Left cardiac atrium (tissue), 4 donors: ENCODE measurements at regions of chr7 and their contacts with region 1.

Region 1: DNA sequence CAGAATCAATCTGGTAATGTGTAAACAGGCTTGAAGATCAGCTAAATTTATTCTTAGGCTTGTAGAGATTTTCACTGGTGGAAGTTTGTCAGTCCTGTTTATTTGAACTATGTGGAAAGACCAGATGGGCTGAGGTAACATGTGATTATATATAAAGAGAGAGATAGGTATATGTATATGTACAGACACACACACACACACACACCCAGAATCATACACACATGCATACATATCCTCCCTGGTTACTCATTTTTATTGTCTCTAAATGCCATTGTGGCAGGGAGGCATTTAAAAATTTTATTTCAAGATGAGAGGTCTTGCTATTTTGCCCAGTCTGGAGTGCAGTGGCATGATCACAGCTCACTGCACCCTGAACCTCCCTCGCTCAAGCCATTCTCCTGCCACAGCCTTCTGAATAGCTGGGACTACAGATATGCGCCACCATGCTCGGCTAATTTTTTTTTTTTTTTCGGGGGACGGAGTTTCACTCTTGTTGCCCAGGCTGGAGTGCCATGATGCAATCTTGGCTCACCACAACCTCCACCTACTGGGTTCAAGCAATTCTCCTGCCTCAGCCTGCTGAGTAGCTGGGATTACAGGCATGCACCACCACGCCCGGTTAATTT is 78.1 kb upstream of the CYTH3 start:
- DNase-seq: no peak
- ATAC-seq: no peak

Region 2: DNA sequence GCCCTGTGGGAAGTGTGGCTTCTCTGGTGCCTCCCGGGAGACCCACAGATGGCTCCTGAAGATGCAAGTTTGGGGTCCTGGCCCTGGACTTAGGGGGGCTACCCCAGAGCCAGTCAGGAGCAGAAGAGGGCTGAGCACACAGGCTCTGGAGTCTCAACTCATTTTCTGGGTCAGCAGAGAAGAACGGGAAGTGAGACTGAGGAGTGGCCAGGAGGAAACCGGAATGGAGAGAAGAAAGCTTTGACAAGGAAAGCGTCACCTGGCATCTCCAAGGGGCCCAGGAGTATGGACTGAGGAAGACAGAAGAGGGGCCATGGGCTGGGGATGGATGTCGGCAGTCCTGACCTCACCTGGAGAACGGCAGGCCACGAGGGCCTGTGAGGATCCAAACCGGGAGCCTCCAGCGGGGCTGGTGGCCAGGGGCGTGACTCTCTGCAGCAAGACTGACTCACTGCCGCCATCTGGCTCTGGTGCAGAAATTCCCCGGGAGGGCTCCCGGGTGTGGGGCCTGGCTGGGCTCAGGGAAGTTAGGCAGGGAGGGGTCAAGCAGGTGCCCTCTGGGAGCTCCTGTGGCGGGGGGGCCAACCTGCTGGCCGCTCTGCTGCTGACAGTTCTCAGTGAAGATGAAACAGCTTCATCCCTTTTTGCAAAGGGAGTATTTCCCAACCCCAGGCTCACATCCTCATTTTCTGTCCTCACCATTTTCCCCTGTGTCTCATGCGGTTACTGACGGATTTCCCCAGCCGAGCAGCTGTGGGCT is 73.6 kb after region 1 on chr7:
- intact Hi-C with region 1: loop called in 1 of 2 experiments (anchors 10 kb)
- DNase-seq: no peak
- ATAC-seq: peak; percentile 36 to 49

Region 3: DNA sequence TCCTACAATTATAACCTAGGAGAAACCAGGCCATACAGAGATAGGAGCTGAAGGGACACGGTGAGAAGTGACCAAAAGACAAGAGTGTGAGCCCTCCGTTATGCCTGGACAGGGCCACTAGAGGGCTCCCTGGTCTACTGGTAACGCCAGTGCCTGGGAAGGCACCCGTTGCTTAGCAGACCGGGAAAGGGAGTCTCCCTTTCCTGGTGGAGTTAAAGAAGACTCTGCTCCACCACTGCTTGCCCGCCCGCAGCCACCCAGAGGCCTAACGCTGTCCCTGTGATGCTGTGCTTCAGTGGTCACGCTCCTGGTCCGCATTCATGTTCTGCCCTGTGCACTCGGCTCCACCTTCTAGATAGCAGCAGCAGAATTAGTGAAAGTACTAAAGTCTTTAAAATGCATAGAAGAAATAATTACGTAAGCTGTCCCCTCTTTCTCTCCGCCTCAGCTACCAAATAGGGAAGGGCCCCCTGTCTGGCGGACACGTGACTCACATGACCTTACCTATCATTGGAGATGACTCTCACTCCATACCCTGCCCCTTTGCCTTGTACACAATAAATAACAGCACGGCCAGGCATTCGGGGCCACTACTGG is 165.9 kb after region 1 on chr7:
- intact Hi-C with region 1: no loop called
- DNase-seq: peak; percentile 89
- ATAC-seq: peak; percentile 82 to 92